ENCODE measurements at regions of chr14 and their contacts with region 1.

Region 1: DNA sequence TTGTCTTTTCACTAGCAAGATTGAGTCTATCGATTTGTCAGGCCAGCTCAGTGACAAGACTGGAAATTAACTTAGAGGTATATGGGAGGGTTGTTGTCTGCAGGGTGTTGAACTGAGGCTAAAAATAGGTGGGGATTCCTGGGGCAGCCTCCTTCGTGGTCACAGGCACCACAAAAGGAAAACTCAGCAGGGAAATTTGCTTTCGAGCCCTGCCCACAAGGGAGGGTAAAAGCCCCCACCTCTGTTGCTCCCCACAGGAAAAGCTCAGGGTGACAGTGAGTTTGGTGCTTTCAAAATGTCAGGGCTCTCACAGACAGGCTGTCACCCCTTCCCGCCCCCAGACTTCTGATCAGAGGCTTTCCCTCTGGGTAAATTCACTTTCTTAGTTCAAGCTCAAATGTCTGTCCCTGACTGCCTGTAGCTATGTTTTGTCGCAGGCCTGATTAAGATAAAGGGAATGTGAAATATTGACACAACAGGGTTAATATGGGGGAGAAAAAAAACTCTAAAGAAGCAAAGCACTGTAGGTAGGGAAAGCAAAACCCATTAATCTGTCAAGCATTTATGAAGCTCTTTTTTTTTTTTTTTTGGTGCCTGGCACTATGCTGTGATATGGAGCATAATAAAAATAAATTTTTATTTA is 11.7 kb upstream of the NFKBIA start:
- DNase-seq: no peak
- H3K4me3 ChIP-seq: no peak overlapping the region
- H3K27ac ChIP-seq: no peak overlapping the region
- H3K4me1 ChIP-seq: peaks cover 11% of the 10 kb centered on the region
- H3K27me3 ChIP-seq: no peaks in the 10 kb centered on the region
- CTCF ChIP-seq: no peak

Region 2: GRCh38 chr14:34548472-34548981 is 867.7 kb before region 1 on chr14:
- CTCF ChIA-PET with region 1: no interaction called
- dilution Hi-C with region 1: no loop called
- in situ Hi-C with region 1: loop called in 1 of 2 experiments (anchors 25 kb)
- intact Hi-C with region 1: loop called (anchors 5 kb)
- DNase-seq: peak; percentile 76
- H3K4me3 ChIP-seq: no peak overlapping the region
- H3K27ac ChIP-seq: no peak overlapping the region
- H3K4me1 ChIP-seq: no peaks in the 10 kb centered on the region
- H3K27me3 ChIP-seq: no peaks in the 10 kb centered on the region
- CTCF ChIP-seq: no peak

Region 3: GRCh38 chr14:34875031-34875922 is 541.0 kb before region 1 on chr14 and contains the start of gene BAZ1A:
- CTCF ChIA-PET with region 1: interaction called, 9 read pairs
- dilution Hi-C with region 1: no loop called
- in situ Hi-C with region 1: no loop called
- intact Hi-C with region 1: loop called (anchors 2 kb)
- DNase-seq: peak; percentile 93
- H3K4me3 ChIP-seq: peak within 1 kb of the TSS; percentile 74 to 98 (median 74)
- H3K27ac ChIP-seq: peak within 1 kb of the TSS; percentile 98
- H3K4me1 ChIP-seq: peaks cover 14% of the 10 kb centered on the region
- H3K27me3 ChIP-seq: no peaks in the 10 kb centered on the region
- CTCF ChIP-seq: no peak
- total RNA-seq, gene BAZ1A: 25.0 to 42.3 TPM

Region 4: GRCh38 chr14:35088514-35088913 is 327.7 kb before region 1 on chr14:
- CTCF ChIA-PET with region 1: no interaction called
- dilution Hi-C with region 1: no loop called
- in situ Hi-C with region 1: no loop called
- intact Hi-C with region 1: loop called (anchors 1 kb)
- DNase-seq: peak; percentile 11
- H3K4me3 ChIP-seq: no peak overlapping the region
- H3K27ac ChIP-seq: no peak overlapping the region
- H3K4me1 ChIP-seq: no peaks in the 10 kb centered on the region
- H3K27me3 ChIP-seq: no peaks in the 10 kb centered on the region
- CTCF ChIP-seq: no peak

Region 5: GRCh38 chr14:35215110-35215876 is 200.9 kb before region 1 on chr14:
- CTCF ChIA-PET with region 1: no interaction called
- dilution Hi-C with region 1: no loop called
- in situ Hi-C with region 1: loop called in 1 of 2 experiments (anchors 5 kb)
- intact Hi-C with region 1: no loop called
- DNase-seq: peak; percentile 31
- H3K4me3 ChIP-seq: no peak overlapping the region
- H3K27ac ChIP-seq: peak overlapping the region; percentile 70
- H3K4me1 ChIP-seq: peaks cover 28% of the 10 kb centered on the region
- H3K27me3 ChIP-seq: no peaks in the 10 kb centered on the region
- CTCF ChIP-seq: peak; percentile 19 to 51

Region 6: DNA sequence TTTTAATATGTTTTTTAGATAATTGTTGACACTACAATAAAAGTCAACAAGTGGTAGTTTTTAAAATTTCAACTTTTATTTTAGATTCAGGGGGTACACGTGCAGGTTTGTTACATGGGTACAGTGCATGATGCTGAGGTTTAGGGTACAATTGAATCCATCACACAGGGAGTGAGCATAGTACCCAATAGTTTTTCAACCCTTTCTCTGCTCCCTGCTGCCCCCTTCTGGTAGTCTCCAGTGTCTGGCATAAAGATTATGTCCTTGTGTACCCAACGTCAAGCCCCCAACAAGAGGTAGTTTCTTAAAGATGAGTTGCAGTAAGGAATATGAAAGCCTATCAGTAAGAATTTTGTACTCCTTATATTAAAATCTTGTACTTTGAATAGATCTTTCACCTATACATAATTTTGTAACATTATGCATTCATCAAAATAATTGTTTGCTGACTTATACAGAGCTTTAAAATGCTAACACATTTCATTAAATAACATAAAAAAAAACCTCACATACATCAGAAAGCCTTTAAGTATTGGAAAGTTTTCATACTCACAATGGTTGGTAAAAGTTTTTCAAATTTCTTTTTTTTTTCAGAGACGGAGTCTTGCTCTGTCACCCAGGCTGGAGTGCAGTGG is 398.3 kb after region 1 on chr14:
- CTCF ChIA-PET with region 1: no interaction called
- dilution Hi-C with region 1: no loop called
- in situ Hi-C with region 1: no loop called
- intact Hi-C with region 1: loop called (anchors 5 kb)
- DNase-seq: peak; percentile 23
- H3K4me3 ChIP-seq: no peak overlapping the region
- H3K27ac ChIP-seq: no peak overlapping the region
- H3K4me1 ChIP-seq: peaks cover under 1% of the 10 kb centered on the region
- H3K27me3 ChIP-seq: no peaks in the 10 kb centered on the region
- CTCF ChIP-seq: peak; percentile 76 to 88

Measured in mammary epithelial cell (primary cell).